Left colon (tissue), 2 donors: ENCODE measurements at regions of chr4 and their contacts with region 1.

Region 1: DNA sequence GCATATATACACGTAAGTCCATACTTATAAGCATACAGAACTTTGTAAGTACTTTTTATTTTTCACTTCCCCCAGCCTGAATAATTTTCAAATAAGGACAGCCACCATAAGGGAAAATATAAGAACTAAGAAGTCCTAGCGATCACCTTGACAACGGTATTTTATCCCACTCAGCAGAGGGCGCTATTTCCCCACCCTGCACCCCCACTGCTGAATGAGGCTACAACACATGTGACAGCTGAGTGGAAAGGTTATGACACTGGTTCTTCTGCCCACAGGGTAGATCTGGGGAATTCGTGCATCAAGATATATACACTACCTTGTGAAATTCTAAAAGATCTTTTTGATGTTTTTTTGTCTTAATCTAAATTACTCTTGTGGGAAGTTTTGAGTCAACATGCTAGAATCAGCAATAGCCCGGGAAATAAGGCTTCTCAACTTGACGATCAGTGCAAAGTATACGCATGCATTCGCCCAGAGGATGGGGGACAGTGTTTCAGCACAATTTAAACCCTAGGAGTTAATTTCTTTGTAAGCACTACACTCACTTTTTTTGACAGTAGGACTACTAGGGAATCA is 151.5 kb downstream of the CORIN start:
- DNase-seq: peak; percentile 29 to 50
- ATAC-seq: peak; percentile 77

Region 2: GRCh38 chr4:46667801-46668200 is 1018.6 kb before region 1 on chr4:
- intact Hi-C with region 1: no loop called
- DNase-seq: no peak
- ATAC-seq: no peak

Region 3: DNA sequence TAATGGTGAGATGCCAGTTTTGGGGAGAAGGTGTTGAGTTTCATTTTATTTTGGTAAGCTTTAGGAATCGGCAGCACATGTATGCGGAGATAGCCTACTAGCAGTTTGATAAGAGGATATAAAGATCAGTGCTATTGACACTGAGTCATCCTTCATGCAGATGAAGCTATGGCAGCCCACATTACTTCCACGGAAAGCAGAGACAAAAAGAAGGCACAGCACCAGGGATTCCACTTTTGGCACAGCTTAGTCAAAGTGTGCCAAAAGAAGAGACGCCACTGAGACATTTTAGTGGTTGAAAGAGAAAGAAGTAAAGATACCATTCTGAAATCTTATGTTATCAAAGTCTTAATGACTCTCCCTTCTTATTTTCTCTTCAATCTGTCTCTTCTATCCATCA is 551.2 kb before region 1 on chr4:
- intact Hi-C with region 1: no loop called
- DNase-seq: no peak
- ATAC-seq: no peak

Region 4: GRCh38 chr4:47154816-47155370 is 531.5 kb before region 1 on chr4:
- intact Hi-C with region 1: no loop called
- DNase-seq: no peak
- ATAC-seq: no peak

Region 5: DNA sequence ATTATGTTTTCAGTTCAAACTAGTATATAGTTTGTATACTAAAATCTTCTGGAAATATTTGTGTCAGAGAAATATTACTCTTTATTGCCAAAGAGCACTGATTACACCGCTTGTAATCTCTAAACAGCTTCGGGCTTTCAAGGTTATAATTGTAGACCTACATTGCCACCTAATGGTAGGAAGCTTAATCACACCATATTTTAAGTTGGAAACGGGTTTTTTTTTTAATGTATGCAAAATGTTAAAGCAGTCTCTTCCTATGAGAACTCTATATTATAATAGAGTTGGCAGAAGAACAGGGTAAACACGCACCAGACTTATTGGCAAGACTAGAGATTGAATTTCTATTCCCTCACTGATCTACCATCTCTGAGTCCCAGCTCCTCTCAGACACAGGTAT is 247.5 kb after region 1 on chr4:
- intact Hi-C with region 1: loop called in 1 of 2 experiments (anchors 10 kb)
- DNase-seq: no peak
- ATAC-seq: peak; percentile 62